AG04449 (cell line): ENCODE measurements at regions of chr2 and their contacts with region 1.

Region 1: DNA sequence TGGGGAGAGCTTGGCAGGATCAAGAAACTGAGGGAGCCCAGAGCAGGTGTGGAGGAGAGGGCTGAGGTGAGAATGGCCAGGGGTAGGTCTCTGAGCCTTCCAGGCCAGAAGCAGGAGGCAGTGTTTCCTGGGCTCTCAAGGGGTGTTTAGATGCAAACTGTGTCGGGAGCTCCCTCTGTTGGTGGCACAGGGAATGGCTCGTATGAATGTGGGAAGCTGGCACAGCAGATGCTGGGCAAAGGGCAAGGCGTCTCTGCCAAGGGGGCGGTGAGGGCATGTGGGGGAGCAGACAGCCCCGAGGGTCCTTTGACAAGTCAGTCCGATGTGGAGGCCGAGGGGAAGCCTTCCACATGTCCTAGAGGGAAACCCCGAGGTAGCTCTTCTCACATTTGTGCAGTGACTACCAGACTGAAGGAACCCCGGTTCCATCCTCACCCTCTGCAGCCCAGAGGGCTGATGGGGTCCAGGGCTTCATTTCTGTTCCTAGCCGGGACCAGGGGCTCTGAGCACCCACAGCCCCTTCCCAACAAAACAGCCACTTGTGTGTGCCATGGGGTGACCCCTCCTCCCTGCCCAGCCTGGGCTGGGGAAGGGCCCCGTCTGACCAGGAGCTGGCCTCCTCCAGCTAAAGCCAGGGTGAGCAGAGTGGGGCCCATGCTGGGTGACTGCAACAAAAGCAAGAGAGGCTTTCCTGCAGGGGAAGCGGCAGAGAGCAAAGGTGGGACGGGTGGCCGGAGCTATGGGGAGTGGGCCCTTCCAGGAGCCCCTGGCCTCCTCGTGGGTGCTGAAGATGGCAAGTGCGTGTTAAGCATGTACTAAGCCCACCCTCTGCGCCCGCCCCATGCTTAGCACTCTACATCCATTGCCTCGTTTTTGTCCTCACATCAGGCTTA is 103.4 kb downstream of the SEPTIN10 start:
- DNase-seq: no peak
- H3K4me3 ChIP-seq: no peak overlapping the region
- CTCF ChIP-seq: peak; percentile 92

Region 2: GRCh38 chr2:108927936-108928659 is 582.3 kb before region 1 on chr2:
- CTCF ChIA-PET with region 1: interaction called, 13 read pairs
- POLR2A ChIA-PET with region 1: no interaction called
- DNase-seq: no peak
- H3K4me3 ChIP-seq: no peak overlapping the region
- CTCF ChIP-seq: peak; percentile 85

Region 3: DNA sequence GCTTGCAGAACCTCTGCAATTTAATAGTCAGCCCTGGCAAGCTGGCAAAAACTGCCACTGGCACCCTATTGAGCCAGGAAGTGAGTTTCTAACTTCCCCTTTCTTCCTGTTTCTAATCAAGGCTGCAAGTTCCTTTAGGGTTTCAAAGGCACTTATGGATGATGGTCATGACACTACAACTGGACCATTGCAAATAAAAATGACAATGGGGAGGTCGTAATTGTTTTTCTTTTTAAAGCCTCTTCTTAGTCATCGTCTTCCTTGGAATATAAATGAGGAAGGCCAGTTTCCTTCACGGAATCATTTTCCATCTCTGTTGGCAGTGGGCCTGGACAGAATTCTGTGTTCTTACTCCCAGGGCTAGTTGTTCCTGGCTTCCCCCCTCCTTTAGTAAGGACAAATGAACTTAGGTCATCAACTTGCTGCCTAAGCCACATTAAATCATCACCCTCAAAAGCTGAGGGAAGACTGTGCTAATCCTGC is 345.6 kb before region 1 on chr2:
- CTCF ChIA-PET with region 1: interaction called, 18 read pairs
- POLR2A ChIA-PET with region 1: no interaction called
- DNase-seq: no peak
- H3K4me3 ChIP-seq: no peak overlapping the region
- CTCF ChIP-seq: no peak

Region 4: DNA sequence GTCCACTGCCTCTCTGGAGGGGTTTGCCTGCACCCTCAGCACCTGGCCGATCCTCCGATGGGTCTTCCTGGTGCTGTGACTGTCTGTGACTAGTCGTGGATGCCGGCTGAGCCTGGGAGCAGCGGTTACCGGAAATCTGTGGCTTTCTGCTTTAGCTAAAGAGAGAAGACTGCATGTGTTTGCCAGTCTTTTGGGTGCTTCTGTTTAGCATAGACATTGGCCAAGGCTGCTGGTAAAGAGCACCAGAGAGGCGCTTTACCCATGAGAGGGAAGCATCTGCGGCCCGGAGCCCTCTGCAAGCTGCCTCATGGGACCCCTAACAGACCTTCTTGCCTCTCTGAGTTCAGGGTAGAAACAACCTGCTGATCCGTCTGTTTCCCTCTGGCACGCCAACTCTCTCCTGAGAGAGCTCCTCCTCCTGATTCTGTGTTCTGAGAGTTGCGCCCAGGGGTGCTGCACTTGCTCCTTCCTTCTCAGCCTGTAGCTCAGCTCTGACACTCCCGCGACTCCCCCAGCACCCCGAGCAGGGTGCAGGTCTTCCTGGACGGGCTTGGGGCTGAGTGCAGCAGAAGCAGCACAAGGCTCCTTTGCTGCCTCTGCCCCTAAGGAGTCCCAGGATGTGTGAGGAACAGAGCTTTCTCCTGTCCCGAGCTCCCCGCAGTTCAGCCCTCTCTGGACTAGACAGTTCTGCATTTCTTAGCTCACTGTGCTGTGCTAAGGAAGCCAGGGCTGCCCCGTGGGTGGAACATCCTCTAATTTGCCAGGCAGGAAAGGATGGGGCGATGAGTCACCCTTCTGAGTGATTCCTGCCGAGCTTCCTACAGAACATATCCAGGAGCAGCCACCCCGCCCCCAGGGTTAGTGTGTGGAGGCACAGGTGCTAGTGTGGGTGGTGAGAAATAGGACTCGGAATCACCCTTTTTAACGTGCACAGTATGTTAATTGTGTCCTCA is 178.2 kb before region 1 on chr2:
- CTCF ChIA-PET with region 1: interaction called, 21 read pairs
- POLR2A ChIA-PET with region 1: interaction called, 3 read pairs
- DNase-seq: no peak
- H3K4me3 ChIP-seq: peak overlapping the region; percentile 48
- CTCF ChIP-seq: no peak

Region 5: DNA sequence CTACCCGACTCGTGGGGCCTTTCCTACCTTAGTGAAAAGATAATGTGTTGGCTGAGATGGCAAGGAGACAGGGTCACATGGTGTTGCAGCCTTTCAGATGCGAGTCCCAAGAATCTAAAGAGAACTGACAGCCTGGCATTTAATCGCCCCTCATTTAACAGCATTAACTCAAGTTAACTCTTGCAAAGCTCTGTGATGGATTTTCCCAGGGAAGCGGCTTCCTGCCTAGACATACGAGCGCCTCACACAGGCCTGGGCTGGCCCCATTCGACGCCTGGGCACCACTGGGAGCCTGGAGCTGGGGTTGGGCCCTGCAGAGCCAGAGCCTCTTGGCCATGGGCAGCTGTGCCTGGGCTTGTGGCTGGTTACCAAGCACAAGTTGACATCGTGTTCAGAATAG is 37.4 kb before region 1 on chr2:
- CTCF ChIA-PET with region 1: interaction called, 10 read pairs
- POLR2A ChIA-PET with region 1: no interaction called
- DNase-seq: no peak
- H3K4me3 ChIP-seq: no peak overlapping the region
- CTCF ChIP-seq: no peak

Region 6: GRCh38 chr2:109497463-109497862 is 12.9 kb before region 1 on chr2:
- CTCF ChIA-PET with region 1: interaction called, 101 read pairs
- POLR2A ChIA-PET with region 1: no interaction called
- DNase-seq: peak; percentile 26
- H3K4me3 ChIP-seq: no peak overlapping the region
- CTCF ChIP-seq: no peak